Vagina (tissue), 2 donors: ENCODE measurements at regions of chr18 and their contacts with region 1.

Region 1: DNA sequence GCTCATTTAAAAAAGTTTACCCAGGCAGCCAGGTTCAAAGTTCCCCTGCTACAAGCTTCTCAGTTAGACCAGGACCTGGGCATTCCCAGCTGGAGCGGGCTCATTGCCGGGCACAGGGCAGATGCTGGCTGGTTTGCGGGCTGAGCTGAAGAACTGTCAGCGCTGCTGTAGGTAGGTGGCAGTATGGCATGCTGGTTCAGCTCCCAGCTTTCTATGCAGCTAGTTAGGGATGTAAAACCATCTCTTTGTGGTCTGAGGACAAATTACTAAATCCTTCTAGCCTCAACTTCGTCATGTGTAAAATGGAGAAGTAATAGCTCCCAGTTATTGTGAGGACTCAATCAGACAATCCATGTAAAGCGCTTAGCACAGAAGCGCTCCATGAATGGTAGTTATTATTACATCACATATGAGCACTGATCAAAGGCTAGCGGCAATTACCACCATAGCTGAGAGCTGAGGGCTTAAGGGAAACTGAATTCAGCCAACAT is 2.4 kb upstream of the LDLRAD4 start:
- DNase-seq: peak in 1 of 2 donors; percentile 58
- H3K4me3 ChIP-seq: no peak overlapping the region
- H3K27ac ChIP-seq: no peak overlapping the region
- H3K4me1 ChIP-seq: peaks cover 39% of the 10 kb centered on the region
- H3K27me3 ChIP-seq: no peaks in the 10 kb centered on the region
- CTCF ChIP-seq: peak; percentile 54 to 73 (median 55)
- POLR2A ChIP-seq: no peak

Region 2: DNA sequence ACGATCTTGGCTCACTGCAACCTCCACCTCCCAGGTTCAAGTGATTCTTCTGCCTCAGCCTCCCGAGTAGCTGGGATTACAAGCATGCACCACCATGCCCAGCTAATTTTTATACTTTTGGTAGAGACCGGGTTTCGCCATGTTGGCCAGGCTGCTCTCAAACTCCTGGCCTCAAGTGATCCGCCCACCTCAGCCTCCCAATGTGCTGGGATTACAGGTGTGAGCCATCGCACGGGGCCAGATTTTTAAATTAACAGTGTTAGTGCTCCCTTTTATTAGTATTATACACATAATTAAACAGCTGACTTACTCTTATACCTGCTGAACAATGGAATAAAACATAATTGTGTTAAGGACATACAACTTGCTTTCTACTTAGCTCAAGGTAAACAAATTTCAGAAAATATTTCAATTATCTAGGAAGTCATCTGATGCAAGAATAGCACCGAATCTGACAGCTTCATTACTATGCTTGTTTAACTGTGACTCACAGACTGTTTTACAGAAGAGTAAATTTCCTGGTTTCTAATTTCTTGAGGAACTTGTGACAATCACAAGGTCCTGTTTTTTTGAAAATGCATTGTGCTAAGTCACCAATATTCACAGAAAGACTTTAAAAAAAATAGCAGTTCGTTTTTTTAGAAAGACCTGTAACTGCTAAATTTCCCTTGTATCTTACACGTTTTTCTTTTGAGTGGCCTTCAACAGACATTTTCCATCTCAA is 609.4 kb before region 1 on chr18:
- intact Hi-C with region 1: no loop called
- DNase-seq: no peak
- H3K4me3 ChIP-seq: no peak overlapping the region
- H3K27ac ChIP-seq: peak overlapping the region; percentile 37
- H3K4me1 ChIP-seq: peaks cover 26% of the 10 kb centered on the region
- H3K27me3 ChIP-seq: no peaks in the 10 kb centered on the region
- CTCF ChIP-seq: no peak
- POLR2A ChIP-seq: no peak

Region 3: DNA sequence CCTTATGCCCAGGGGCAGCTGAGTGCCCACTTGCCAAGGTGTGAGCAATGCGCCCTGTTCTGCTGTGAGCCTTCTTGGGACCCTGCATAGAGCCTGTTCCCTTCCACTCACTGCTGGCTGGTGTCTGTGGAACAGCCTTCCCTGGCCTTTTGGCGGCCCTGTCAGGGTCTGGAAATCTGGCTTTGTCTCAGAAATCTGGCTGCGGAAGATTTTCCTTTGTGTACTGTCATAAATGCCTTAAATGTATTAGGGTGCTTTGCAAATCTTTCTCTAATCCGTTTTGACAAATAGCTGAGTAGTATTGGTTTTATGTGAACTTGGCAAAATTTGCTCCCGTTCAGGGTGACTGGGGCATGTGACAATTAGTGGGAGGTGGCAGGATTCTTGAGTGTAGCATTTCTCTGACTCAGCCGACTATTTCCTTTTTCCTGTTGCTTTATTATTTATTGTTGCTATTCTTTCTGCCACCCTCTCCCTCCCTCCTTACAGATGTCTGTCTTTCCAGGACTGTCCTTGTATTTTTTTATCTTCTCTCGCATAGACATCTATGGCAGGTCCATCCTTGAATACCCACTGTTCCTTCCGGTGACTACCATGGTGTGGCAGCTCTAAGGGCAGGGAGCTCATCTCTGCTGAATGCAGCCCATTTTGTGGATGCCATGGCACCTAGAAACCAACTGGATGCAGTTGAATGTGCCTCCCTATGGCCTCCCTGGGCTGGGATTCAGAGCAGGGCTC is 44.2 kb after region 1 on chr18:
- intact Hi-C with region 1: no loop called
- DNase-seq: no peak
- H3K4me3 ChIP-seq: no peak overlapping the region
- H3K27ac ChIP-seq: peak overlapping the region; percentile 37
- H3K4me1 ChIP-seq: peaks cover 47% of the 10 kb centered on the region
- H3K27me3 ChIP-seq: no peaks in the 10 kb centered on the region
- CTCF ChIP-seq: no peak
- POLR2A ChIP-seq: no peak

Region 4: DNA sequence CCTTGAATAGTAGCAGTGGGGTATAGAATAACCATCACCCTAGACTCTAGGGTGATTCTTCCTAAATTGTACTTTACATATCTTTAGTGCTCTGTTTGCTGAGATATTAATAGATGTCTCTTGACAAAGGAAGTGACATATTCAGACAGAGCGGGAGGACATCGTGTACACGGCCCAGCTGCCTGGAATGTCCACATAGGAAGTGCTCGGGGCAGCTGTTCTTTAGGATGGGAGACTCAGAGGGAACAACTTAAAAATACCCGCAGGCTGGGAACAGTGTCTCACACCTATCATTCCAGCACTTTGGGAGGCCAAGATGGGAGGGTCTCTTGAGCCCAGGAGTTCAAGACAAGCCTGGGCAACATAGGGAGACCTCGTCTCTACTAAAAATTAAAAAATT is 304.2 kb after region 1 on chr18:
- intact Hi-C with region 1: loop called (anchors 5 kb)
- DNase-seq: no peak
- H3K4me3 ChIP-seq: no peak overlapping the region
- H3K27ac ChIP-seq: no peak overlapping the region
- H3K4me1 ChIP-seq: no peaks in the 10 kb centered on the region
- H3K27me3 ChIP-seq: no peaks in the 10 kb centered on the region
- CTCF ChIP-seq: no peak
- POLR2A ChIP-seq: no peak

Region 5: DNA sequence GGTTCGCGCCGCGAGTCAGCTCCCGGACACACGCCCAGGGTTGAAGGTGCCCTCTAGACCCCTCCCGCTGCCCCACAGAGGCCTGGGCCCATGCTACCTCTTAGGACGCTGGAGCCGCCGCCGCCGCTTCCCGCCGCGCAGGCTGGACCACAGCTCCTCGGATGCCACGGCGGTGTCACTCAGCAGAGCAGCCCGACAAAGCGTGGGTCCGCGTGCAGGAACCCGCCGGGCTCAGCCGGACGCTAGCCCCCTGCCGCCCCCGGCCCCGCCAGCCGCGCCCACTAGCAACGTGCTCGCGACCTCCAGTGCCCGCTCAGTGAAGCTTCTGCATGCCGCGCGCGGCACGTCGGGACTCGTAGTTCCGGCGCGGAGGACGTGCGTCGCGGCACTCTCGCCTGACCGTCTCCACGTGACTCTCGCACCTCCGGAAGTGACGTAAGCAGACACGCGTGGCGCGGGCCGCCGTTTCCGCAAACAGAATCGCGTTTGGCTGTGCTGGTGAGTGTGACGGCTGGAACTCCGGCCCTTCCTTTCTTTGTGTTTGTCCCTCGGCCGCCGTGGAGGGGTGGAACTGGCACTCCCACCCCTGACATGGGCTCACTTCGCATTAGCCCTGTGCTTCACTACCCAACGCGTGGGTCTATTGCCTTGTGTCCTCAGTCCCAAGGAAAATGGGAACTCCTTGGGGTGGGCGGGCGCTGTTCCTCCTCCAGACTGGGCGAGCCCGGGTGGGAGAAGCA is 510.3 kb after region 1 on chr18 and contains the starts of genes FAM210A and RNMT:
- intact Hi-C with region 1: loop called (anchors 10 kb)
- DNase-seq: peak; percentile 96 to 98
- H3K4me3 ChIP-seq: peak within 1 kb of the TSS; percentile 88 to 94
- H3K27ac ChIP-seq: peak within 1 kb of the TSS; percentile 94
- H3K4me1 ChIP-seq: peaks cover 53% of the 10 kb centered on the region
- H3K27me3 ChIP-seq: no peaks in the 10 kb centered on the region
- CTCF ChIP-seq: no peak
- POLR2A ChIP-seq: peak in 1 of 2 donors; percentile 61
- total RNA-seq, gene FAM210A: 12.8 TPM
- total RNA-seq, gene RNMT: 12.8 TPM